MCF 10A (cell line): ENCODE measurements at regions of chr6 and their contacts with region 1.

Region 1: DNA sequence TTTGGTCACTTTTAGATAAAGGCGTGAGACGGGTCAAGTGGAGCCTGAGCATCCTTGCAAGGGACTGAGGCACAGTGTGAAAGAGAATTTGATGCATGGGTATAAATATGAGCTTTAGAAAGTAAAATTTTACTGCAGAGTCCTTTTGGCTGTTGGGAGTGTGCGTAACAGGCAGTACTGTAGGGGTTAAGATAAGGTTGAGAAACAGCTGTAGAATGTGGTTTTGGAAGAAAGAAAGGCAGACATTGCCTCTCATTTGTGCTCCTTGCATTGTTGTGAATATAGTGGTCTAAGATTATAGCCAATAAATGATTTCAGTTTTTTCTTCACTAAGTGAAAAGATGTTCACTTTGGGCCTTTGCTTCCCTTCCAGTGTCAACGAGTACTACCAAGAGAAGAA is 73.0 kb downstream of the RREB1 start:
- DNase-seq: no peak
- H3K4me3 Mint-ChIP-seq: no peak overlapping the region
- H3K27ac Mint-ChIP-seq: peak overlapping the region; percentile 44
- H3K4me1 Mint-ChIP-seq: peaks cover 5% of the 10 kb centered on the region
- H3K27me3 Mint-ChIP-seq: no peaks in the 10 kb centered on the region
- CTCF ChIP-seq: no peak

Region 2: GRCh38 chr6:7201688-7202541 is 21.2 kb after region 1 on chr6:
- CTCF ChIA-PET with region 1: interaction called, 3 read pairs
- POLR2A ChIA-PET with region 1: interaction called, 3 read pairs
- intact Hi-C with region 1: loop called (anchors 1 kb)
- DNase-seq: no peak
- H3K4me3 Mint-ChIP-seq: no peak overlapping the region
- H3K27ac Mint-ChIP-seq: no peak overlapping the region
- H3K4me1 Mint-ChIP-seq: no peaks in the 10 kb centered on the region
- H3K27me3 Mint-ChIP-seq: no peaks in the 10 kb centered on the region
- CTCF ChIP-seq: no peak

Region 3: DNA sequence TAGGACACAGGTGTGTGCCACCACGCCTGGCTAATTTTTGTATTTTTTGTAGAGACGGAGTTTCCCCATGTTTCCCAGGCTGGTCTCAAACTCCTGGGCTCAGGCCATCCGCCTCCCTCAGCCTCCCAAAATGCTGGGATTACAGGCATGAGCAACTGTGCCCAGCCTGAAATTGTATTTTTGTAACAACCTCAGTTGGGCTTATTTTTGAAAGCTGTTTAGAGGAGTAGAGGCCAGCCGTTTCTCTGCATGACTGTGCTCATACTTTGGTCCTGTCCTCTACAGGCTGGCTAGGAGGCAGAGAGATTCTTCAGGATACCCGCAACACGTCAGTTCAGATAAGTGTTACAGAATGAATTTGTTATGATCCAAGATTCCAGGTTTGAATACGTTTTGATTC is 186.7 kb after region 1 on chr6:
- CTCF ChIA-PET with region 1: no interaction called
- POLR2A ChIA-PET with region 1: no interaction called
- intact Hi-C with region 1: no loop called
- DNase-seq: no peak
- H3K4me3 Mint-ChIP-seq: no peak overlapping the region
- H3K27ac Mint-ChIP-seq: no peak overlapping the region
- H3K4me1 Mint-ChIP-seq: no peaks in the 10 kb centered on the region
- H3K27me3 Mint-ChIP-seq: no peaks in the 10 kb centered on the region
- CTCF ChIP-seq: no peak